Left lung (tissue), 14 donors: ENCODE measurements at regions of chrX and their contacts with region 1.

Region 1: GRCh38 chrX:153554519-153555167 is 37.2 kb downstream of the ATP2B3 start:
- DNase-seq: peak in 3 of 4 donors; percentile 25 to 61 (median 51)
- ATAC-seq: peak; percentile 87
- H3K4me3 ChIP-seq: no peak overlapping the region
- H3K27ac ChIP-seq: no peak overlapping the region
- H3K4me1 ChIP-seq: no peaks in the 10 kb centered on the region
- H3K27me3 ChIP-seq: no peaks in the 10 kb centered on the region
- CTCF ChIP-seq: peak; percentile 51

Region 2: DNA sequence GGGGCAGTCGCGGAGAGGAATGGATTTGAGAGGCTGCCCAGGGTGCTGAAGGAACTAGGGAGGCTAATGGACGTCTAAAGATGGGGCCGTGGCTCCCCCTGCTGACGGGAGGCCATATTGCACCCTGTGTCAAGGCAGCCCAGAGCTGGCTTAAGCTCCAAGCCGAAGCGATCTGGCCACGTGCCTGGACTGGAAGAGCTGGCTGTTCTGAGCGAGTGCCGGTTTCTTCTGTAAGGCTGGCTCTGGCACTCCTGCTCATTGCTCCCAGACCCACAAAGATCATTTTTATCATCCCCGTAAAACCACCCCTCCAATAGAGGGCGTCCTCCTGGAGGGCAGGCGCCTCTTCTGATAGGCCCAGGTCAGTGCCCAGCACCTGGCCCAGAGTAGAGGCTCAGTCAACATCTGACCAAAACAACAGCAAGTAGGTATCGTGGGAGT is 113.3 kb after region 1 on chrX:
- intact Hi-C with region 1: loop called in 1 of 2 experiments (anchors 10 kb)
- DNase-seq: peak; percentile 77 to 89 (median 83)
- ATAC-seq: peak; percentile 93
- H3K4me3 ChIP-seq: no peak overlapping the region
- H3K27ac ChIP-seq: no peak overlapping the region
- H3K4me1 ChIP-seq: no peaks in the 10 kb centered on the region
- H3K27me3 ChIP-seq: peaks cover 6 to 43% of the 10 kb centered on the region in 2 donors
- CTCF ChIP-seq: peak; percentile 51 to 79

Region 3: DNA sequence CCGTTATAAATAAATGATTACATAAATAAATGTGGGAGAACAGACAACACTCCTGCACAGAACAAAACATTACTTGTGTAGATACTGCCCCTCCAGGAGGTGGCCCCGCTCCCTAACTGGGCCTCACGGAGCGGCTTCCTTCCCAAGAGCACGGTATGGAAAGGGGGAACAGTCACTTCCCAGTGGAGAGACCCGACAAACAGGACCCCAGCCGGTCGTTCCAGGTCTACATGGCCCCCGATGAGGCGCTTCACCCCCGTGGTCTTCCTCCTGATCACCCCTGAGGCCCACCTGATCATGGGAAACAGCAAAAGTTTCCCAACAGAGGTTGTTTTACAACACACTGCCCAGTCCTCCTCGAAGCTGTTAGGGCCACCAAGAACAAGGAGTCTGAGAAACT is 126.5 kb after region 1 on chrX:
- intact Hi-C with region 1: no loop called
- DNase-seq: peak in 1 of 4 donors; percentile 14
- ATAC-seq: no peak
- H3K4me3 ChIP-seq: no peak overlapping the region
- H3K27ac ChIP-seq: no peak overlapping the region
- H3K4me1 ChIP-seq: no peaks in the 10 kb centered on the region
- H3K27me3 ChIP-seq: peaks cover 0 to 32% of the 10 kb centered on the region in 2 donors
- CTCF ChIP-seq: no peak

Region 4: DNA sequence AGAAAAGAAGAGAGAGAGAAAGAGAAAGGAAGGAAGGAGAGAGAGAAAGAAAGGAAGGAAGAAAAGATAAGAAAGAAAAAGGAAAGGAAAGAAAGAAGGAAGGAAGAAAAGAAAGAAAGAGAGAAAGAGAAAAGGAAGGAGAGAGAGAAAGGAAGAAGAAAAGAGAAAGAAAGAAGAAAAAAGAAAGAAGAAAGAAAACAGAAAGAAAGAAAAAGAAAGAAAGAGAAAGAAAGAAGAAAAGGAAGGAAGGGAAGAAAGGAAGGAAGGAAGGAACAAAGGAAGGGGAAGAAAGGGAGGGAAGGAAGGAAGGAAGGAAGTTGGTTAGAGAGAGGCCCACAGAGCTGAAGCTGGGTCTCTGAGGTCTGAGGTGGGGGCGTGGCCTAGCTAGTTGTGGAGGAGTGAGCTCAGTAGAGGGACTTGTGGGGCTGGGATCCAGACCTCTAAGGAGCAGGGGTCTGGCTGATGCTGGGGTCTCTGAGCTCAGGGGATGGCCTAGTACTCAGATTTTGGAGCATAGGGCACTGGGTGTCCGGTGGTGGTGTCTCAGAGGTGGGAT is 302.8 kb after region 1 on chrX:
- intact Hi-C with region 1: no loop called
- DNase-seq: no peak
- ATAC-seq: no peak
- H3K4me3 ChIP-seq: no peak overlapping the region
- H3K27ac ChIP-seq: no peak overlapping the region
- H3K4me1 ChIP-seq: no peaks in the 10 kb centered on the region
- H3K27me3 ChIP-seq: peaks cover 0 to 13% of the 10 kb centered on the region in 2 donors
- CTCF ChIP-seq: no peak

Region 5: DNA sequence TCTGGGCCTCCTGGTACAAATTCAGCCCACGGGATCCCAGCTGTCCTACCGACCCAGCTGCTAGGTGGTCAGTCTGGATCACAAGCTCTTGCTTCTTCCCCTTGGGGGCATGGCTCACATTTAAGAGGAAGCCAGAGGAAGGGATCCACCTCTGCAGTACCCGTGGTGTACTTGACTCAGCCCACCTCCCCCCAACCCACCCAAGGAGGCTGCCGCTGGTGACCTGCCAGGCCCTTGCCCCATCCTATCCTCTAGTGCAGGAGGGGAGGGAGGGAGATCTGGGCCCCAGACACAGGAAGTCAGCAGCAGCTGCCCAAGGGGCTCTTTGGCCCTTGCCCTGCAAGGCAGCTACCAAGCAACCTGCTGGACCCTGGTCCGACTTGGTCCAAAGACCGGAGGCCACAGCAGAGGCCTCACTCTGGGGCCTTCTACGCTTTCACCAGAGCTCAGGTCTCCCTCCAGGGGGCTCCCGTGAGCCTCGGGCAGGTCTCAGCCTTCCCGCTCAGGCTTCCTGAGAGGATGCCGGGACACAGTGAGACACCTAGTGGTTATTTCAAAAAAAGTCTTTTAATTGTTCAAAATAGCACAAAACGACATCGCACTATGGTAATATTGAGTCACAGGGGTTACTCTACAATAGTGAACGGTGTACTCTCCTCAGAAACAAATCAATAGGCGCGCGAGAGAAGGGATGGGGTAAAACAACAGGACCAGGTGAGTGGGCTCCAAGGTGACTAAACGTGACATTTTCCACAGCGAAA is 392.5 kb after region 1 on chrX:
- intact Hi-C with region 1: no loop called
- DNase-seq: peak in 3 of 4 donors; percentile 62 to 86 (median 82)
- ATAC-seq: peak; percentile 87
- H3K4me3 ChIP-seq: no peak overlapping the region
- H3K27ac ChIP-seq: peak overlapping the region in 1 of 2 donors; percentile 61
- H3K4me1 ChIP-seq: peaks cover 0 to 47% of the 10 kb centered on the region in 2 donors
- H3K27me3 ChIP-seq: no peaks in the 10 kb centered on the region
- CTCF ChIP-seq: peak; percentile 71 to 74